MCF 10A (cell line): ENCODE measurements at regions of chr13 and their contacts with region 1.

Region 1: GRCh38 chr13:22801402-22802003 is 379.3 kb upstream of the SGCG start:
- DNase-seq: no peak
- H3K4me3 Mint-ChIP-seq: no peak overlapping the region
- H3K27ac Mint-ChIP-seq: no peak overlapping the region
- H3K4me1 Mint-ChIP-seq: no peaks in the 10 kb centered on the region
- H3K27me3 Mint-ChIP-seq: no peaks in the 10 kb centered on the region
- CTCF ChIP-seq: peak; percentile 47

Region 2: GRCh38 chr13:20940083-20940880 is 1861.2 kb before region 1 on chr13:
- CTCF ChIA-PET with region 1: no interaction called
- POLR2A ChIA-PET with region 1: no interaction called
- intact Hi-C with region 1: loop called (anchors 5 kb)
- DNase-seq: no peak
- H3K4me3 Mint-ChIP-seq: no peak overlapping the region
- H3K27ac Mint-ChIP-seq: peak overlapping the region; percentile 63
- H3K4me1 Mint-ChIP-seq: peaks cover 12% of the 10 kb centered on the region
- H3K27me3 Mint-ChIP-seq: no peaks in the 10 kb centered on the region
- CTCF ChIP-seq: no peak

Region 3: DNA sequence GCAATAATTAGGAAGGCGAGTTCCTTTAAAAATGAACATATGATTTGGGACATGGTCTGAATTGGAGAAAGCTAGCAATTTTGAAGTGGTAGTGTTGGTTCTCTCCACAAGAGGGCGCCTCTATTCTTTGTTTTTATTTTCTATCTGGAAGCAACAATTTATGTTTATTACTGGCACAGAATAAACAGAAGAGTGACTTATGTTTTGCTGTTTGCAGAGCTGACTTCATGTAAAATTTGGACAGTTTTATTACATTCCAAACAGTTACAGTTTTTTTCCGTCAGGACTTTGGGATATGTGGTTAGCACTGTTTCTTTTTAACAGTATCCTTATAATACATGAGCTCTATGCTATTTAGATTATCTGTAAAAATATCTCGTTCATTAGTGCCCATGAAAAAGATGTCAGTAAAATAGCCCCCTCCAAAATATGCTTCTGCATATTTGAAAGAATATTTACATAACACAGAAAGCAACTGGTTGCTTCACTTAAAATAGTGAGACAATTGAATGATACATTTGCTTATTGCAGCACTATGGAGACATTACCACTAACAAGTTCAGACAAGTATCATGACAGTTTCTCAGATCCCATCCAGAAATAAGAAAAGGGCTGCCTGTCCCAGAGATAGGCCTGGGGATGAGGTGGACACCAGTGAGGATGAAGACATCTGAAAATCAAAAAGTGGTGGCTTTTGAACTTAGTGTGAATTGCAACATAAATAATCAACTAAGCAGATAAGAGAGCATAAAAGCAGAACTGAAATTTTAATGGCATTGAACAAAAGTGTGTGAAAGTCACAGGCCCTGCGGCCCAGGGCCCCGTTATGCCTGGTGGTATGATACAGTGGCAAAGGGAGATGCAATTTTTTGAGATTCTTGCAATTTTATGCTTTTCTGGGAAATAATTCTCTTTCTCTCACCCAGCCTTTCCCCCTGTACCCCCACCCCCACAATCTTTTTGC is 1162.9 kb before region 1 on chr13:
- CTCF ChIA-PET with region 1: interaction called, 6 read pairs
- POLR2A ChIA-PET with region 1: no interaction called
- intact Hi-C with region 1: loop called (anchors 5 kb)
- DNase-seq: peak; percentile 52
- H3K4me3 Mint-ChIP-seq: no peak overlapping the region
- H3K27ac Mint-ChIP-seq: peak overlapping the region; percentile 47
- H3K4me1 Mint-ChIP-seq: peaks cover 20% of the 10 kb centered on the region
- H3K27me3 Mint-ChIP-seq: no peaks in the 10 kb centered on the region
- CTCF ChIP-seq: peak; percentile 62

Region 4: GRCh38 chr13:22812794-22813193 is 11.3 kb after region 1 on chr13:
- CTCF ChIA-PET with region 1: no interaction called
- POLR2A ChIA-PET with region 1: no interaction called
- intact Hi-C with region 1: no loop called
- DNase-seq: no peak
- H3K4me3 Mint-ChIP-seq: no peak overlapping the region
- H3K27ac Mint-ChIP-seq: no peak overlapping the region
- H3K4me1 Mint-ChIP-seq: peaks cover 6% of the 10 kb centered on the region
- H3K27me3 Mint-ChIP-seq: no peaks in the 10 kb centered on the region
- CTCF ChIP-seq: no peak

Region 5: GRCh38 chr13:23087880-23088279 is 286.4 kb after region 1 on chr13:
- CTCF ChIA-PET with region 1: no interaction called
- POLR2A ChIA-PET with region 1: no interaction called
- intact Hi-C with region 1: loop called (anchors 5 kb)
- DNase-seq: no peak
- H3K4me3 Mint-ChIP-seq: no peak overlapping the region
- H3K27ac Mint-ChIP-seq: no peak overlapping the region
- H3K4me1 Mint-ChIP-seq: no peaks in the 10 kb centered on the region
- H3K27me3 Mint-ChIP-seq: no peaks in the 10 kb centered on the region
- CTCF ChIP-seq: peak; percentile 33

Region 6: GRCh38 chr13:23321535-23322241 is 520.2 kb after region 1 on chr13:
- CTCF ChIA-PET with region 1: interaction called, 47 read pairs
- POLR2A ChIA-PET with region 1: interaction called, 9 read pairs
- intact Hi-C with region 1: loop called (anchors 1 kb)
- DNase-seq: peak; percentile 83
- H3K4me3 Mint-ChIP-seq: peak overlapping the region; percentile 57
- H3K27ac Mint-ChIP-seq: peak overlapping the region; percentile 88
- H3K4me1 Mint-ChIP-seq: peaks cover 21% of the 10 kb centered on the region
- H3K27me3 Mint-ChIP-seq: no peaks in the 10 kb centered on the region
- CTCF ChIP-seq: no peak

Region 7: DNA sequence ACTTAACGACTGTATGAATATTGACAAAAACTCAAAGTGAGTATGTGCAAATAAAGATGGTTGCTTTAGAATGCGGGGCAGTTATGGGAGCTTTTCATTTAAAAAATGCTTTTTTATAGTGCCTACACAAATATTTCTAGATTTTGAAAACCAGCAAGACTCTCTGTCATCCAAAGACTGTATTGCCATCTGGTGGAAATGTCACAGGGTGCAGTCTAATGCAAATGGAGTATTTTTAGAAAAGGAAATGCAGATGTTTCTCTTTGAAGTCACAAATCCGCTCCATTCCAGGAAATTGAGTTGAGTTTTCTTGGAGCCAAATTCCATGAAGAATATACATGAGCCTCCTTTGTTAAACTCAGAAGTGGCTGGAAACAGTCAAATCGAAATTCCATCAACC is 1098.1 kb after region 1 on chr13:
- CTCF ChIA-PET with region 1: interaction called, 11 read pairs
- POLR2A ChIA-PET with region 1: no interaction called
- intact Hi-C with region 1: no loop called
- DNase-seq: peak; percentile 52
- H3K4me3 Mint-ChIP-seq: no peak overlapping the region
- H3K27ac Mint-ChIP-seq: no peak overlapping the region
- H3K4me1 Mint-ChIP-seq: no peaks in the 10 kb centered on the region
- H3K27me3 Mint-ChIP-seq: peaks cover 8% of the 10 kb centered on the region
- CTCF ChIP-seq: peak; percentile 47